CD4-positive, alpha-beta T cell (primary cell): ENCODE measurements at regions of chr3 and their contacts with region 1.

Region 1: GRCh38 chr3:150408221-150409102 is at the start of gene TSC22D2:
- DNase-seq: peak; percentile 93 to 99 (median 97)
- ATAC-seq: peak; percentile 69
- H3K4me3 ChIP-seq: peak within 1 kb of the TSS; percentile 93
- H3K4me3 Mint-ChIP-seq: peak within 1 kb of the TSS; percentile 100
- H3K27ac ChIP-seq: peak within 1 kb of the TSS; percentile 93 to 98
- H3K27ac Mint-ChIP-seq: peak within 1 kb of the TSS; percentile 94
- H3K4me1 ChIP-seq: peaks cover 5% of the 10 kb centered on the region
- H3K4me1 Mint-ChIP-seq: peaks cover 42% of the 10 kb centered on the region
- H3K27me3 ChIP-seq: no peaks in the 10 kb centered on the region
- H3K27me3 Mint-ChIP-seq: no peaks in the 10 kb centered on the region
- CTCF ChIP-seq: no peak
- total RNA-seq, gene TSC22D2: 47.3 to 49.3 TPM

Region 2: GRCh38 chr3:150286390-150287147 is 121.9 kb before region 1 on chr3:
- CTCF ChIA-PET with region 1: interaction called, 3 read pairs
- POLR2A ChIA-PET with region 1: no interaction called
- intact Hi-C with region 1: loop called (anchors 1 to 5 kb)
- DNase-seq: peak in 5 of 14 experiments; percentile 1 to 68 (median 59)
- ATAC-seq: peak; percentile 82
- H3K4me3 ChIP-seq: no peak overlapping the region
- H3K4me3 Mint-ChIP-seq: no peak overlapping the region
- H3K27ac ChIP-seq: no peak overlapping the region
- H3K27ac Mint-ChIP-seq: no peak overlapping the region
- H3K4me1 ChIP-seq: no peaks in the 10 kb centered on the region
- H3K4me1 Mint-ChIP-seq: no peaks in the 10 kb centered on the region
- H3K27me3 ChIP-seq: peaks cover 0 to 8% of the 10 kb centered on the region in 2 experiments
- H3K27me3 Mint-ChIP-seq: peaks cover 16% of the 10 kb centered on the region
- CTCF ChIP-seq: peak; percentile 65

Region 3: GRCh38 chr3:150391200-150391599 is 17.3 kb before region 1 on chr3:
- CTCF ChIA-PET with region 1: interaction called, 8 read pairs
- POLR2A ChIA-PET with region 1: interaction called, 18 read pairs
- intact Hi-C with region 1: no loop called
- DNase-seq: no peak
- ATAC-seq: no peak
- H3K4me3 ChIP-seq: no peak overlapping the region
- H3K4me3 Mint-ChIP-seq: no peak overlapping the region
- H3K27ac ChIP-seq: no peak overlapping the region
- H3K27ac Mint-ChIP-seq: no peak overlapping the region
- H3K4me1 ChIP-seq: no peaks in the 10 kb centered on the region
- H3K4me1 Mint-ChIP-seq: peaks cover 4% of the 10 kb centered on the region
- H3K27me3 ChIP-seq: no peaks in the 10 kb centered on the region
- H3K27me3 Mint-ChIP-seq: no peaks in the 10 kb centered on the region
- CTCF ChIP-seq: no peak

Region 4: DNA sequence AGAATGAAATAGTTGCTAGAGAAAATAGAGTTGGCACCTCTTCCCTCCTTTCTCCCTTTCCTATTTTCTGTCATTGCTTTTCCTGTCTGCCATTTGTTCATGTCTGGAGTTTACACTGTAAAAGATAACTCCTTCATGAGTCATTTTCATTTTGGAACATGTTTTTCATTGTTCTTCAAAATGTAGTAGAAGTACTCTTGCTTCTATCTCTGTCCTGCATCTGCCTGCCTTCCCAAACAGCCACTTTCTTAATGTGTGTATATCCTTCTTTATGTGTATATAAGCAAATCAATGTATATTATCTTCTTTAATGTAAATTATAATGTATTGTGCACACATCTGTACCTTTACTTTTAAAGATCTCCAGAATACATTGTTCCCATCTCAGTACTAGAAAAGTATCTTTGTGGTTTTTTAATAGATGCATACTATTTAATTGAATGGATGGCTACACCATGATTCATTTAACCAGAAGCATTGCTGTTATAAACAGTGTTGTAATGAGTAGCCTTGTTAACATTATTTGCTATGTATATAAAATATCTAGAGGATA is 40.8 kb after region 1 on chr3:
- CTCF ChIA-PET with region 1: no interaction called
- POLR2A ChIA-PET with region 1: no interaction called
- intact Hi-C with region 1: loop called in 1 of 2 experiments (anchors 5 kb)
- DNase-seq: no peak
- ATAC-seq: no peak
- H3K4me3 ChIP-seq: no peak overlapping the region
- H3K4me3 Mint-ChIP-seq: no peak overlapping the region
- H3K27ac ChIP-seq: no peak overlapping the region
- H3K27ac Mint-ChIP-seq: no peak overlapping the region
- H3K4me1 ChIP-seq: peaks cover 2% of the 10 kb centered on the region
- H3K4me1 Mint-ChIP-seq: peaks cover 53% of the 10 kb centered on the region
- H3K27me3 ChIP-seq: no peaks in the 10 kb centered on the region
- H3K27me3 Mint-ChIP-seq: no peaks in the 10 kb centered on the region
- CTCF ChIP-seq: no peak

Region 5: DNA sequence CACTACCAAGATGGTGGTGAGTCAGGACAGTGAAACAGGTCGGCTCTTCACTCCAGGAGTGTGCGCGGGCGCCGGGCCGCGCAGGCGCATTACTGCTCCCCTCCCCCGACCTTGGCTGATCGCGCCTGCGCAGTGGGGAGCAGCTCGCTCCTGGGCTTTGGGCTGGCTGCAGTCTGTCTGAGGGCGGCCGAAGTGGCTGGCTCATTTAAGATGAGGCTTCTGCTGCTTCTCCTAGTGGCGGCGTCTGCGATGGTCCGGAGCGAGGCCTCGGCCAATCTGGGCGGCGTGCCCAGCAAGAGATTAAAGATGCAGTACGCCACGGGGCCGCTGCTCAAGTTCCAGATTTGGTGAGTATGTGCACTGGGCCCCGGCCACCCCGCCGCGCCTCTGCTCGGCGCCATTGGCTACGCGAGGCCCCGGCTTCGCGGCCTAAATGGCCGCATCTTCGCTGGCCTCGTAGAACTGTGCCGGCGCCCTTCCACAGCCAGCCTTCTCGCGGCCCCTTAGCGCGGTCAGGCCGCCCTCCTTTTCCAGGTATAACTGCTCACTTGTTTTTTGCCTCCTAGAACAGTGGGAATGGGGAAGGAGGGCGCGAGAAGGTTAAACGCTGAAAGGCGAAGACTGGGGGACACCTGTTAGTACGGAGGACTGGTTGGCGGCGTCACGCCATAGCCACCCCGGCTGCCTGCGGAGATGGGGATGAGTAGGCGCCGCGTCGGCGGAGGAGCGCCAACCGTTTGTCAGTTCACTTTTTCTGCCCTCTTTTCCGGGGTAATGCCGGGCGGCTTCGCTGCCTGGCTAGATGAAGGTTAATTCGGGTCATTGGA is 194.9 kb after region 1 on chr3 and contains the start of gene SELENOT:
- CTCF ChIA-PET with region 1: no interaction called
- POLR2A ChIA-PET with region 1: interaction called, 17 read pairs
- intact Hi-C with region 1: loop called in 1 of 2 experiments (anchors 5 kb)
- DNase-seq: peak; percentile 86 to 98 (median 94)
- ATAC-seq: peak; percentile 79
- H3K4me3 ChIP-seq: peak within 1 kb of the TSS; percentile 92
- H3K4me3 Mint-ChIP-seq: peak within 1 kb of the TSS; percentile 96
- H3K27ac ChIP-seq: peak within 1 kb of the TSS; percentile 97 to 98
- H3K27ac Mint-ChIP-seq: peak within 1 kb of the TSS; percentile 100
- H3K4me1 ChIP-seq: peaks cover 34% of the 10 kb centered on the region
- H3K4me1 Mint-ChIP-seq: peaks cover 75% of the 10 kb centered on the region
- H3K27me3 ChIP-seq: no peaks in the 10 kb centered on the region
- H3K27me3 Mint-ChIP-seq: no peaks in the 10 kb centered on the region
- CTCF ChIP-seq: no peak
- total RNA-seq, gene SELENOT: 110 to 115 TPM

Region 6: GRCh38 chr3:151203051-151203420 is 794.6 kb after region 1 on chr3 and contains the start of gene GPR171:
- CTCF ChIA-PET with region 1: no interaction called
- POLR2A ChIA-PET with region 1: no interaction called
- intact Hi-C with region 1: loop called in 1 of 2 experiments (anchors 5 kb)
- DNase-seq: peak; percentile 42 to 89 (median 60)
- ATAC-seq: peak; percentile 88
- H3K4me3 ChIP-seq: peak within 1 kb of the TSS; percentile 61
- H3K4me3 Mint-ChIP-seq: peak within 1 kb of the TSS; percentile 68
- H3K27ac ChIP-seq: peak within 1 kb of the TSS; percentile 63 to 78
- H3K27ac Mint-ChIP-seq: peak within 1 kb of the TSS; percentile 85
- H3K4me1 ChIP-seq: peaks cover 38% of the 10 kb centered on the region
- H3K4me1 Mint-ChIP-seq: peaks cover 78% of the 10 kb centered on the region
- H3K27me3 ChIP-seq: no peaks in the 10 kb centered on the region
- H3K27me3 Mint-ChIP-seq: no peaks in the 10 kb centered on the region
- CTCF ChIP-seq: no peak
- total RNA-seq, gene GPR171: 9.7 to 16.7 TPM